T-cell (primary cell): ENCODE measurements at regions of chr9 and their contacts with region 1.

Region 1: GRCh38 chr9:14353222-14354056 is 39.5 kb upstream of the NFIB start:
- DNase-seq: peak in 34 of 35 experiments; percentile 4 to 71 (median 46)
- ATAC-seq: peak in 2 of 4 experiments; percentile 50 to 53
- H3K4me3 ChIP-seq: no peak overlapping the region
- H3K4me3 Mint-ChIP-seq: no peak overlapping the region
- H3K27ac ChIP-seq: no peak overlapping the region
- H3K27ac Mint-ChIP-seq: no peak overlapping the region
- H3K4me1 ChIP-seq: peaks cover 0 to 5% of the 10 kb centered on the region in 2 experiments
- H3K4me1 Mint-ChIP-seq: peaks cover 8 to 11% (median 11%) of the 10 kb centered on the region in 3 donors
- H3K27me3 ChIP-seq: peaks cover 0 to 38% of the 10 kb centered on the region in 2 experiments
- H3K27me3 Mint-ChIP-seq: peaks cover 60 to 61% of the 10 kb centered on the region in 2 donors

Region 2: DNA sequence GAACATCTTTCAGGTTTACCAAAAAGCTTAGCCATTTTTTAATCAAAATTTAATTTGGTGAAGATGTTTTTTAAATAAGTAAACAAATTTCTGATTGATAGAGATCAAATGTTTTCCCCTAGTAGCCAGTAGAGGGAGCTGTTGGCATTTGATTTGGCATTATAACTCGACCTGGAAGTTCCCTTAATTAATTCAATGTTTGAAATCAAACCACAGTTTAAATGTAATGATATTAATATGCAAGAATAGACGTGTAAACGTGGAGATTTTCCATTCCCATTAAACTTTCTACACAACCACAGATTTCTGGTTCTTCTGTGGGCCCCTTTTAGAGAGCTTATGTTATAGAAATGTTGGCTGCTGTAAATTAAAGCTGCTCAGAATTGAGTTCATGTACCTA is 925.9 kb before region 1 on chr9:
- CTCF ChIA-PET with region 1: interaction called, 6 to 26 read pairs
- POLR2A ChIA-PET with region 1: no interaction called
- DNase-seq: peak in 1 of 35 experiments; percentile 42
- ATAC-seq: no peak
- H3K4me3 ChIP-seq: no peak overlapping the region
- H3K4me3 Mint-ChIP-seq: no peak overlapping the region
- H3K27ac ChIP-seq: no peak overlapping the region
- H3K27ac Mint-ChIP-seq: no peak overlapping the region
- H3K4me1 ChIP-seq: no peaks in the 10 kb centered on the region
- H3K4me1 Mint-ChIP-seq: no peaks in the 10 kb centered on the region
- H3K27me3 ChIP-seq: no peaks in the 10 kb centered on the region
- H3K27me3 Mint-ChIP-seq: no peaks in the 10 kb centered on the region

Region 3: DNA sequence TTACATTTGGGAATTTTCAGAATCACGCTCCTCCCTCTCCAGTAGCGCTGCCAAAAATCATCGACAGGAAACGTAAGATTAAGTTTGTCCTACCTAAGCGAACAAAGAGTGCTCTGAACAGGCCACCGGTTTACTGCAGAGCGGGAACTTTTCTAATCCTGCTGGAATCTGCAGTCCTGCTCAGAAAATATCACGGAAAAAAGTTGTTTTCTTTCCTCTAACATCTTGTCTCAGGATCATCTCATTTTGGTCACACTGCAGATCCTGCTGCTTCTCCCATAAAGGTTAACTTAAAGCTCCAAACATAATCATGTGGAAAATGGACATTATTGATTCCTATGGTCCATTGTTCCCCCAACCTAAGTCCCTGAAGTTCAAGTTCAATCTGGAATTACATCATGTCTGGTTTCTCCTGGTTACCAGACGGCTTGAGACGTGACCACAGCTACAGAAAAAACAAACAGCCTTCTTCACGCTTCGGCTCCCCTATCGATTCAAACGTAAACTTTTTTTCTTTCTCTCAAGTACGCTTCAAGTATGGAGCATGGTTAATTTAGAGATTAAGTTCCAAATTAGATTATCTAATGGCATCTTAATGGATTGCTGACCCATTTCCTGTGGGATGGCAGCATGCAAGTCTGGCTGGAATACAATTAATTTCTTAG is 257.0 kb before region 1 on chr9:
- CTCF ChIA-PET with region 1: no interaction called
- POLR2A ChIA-PET with region 1: no interaction called
- DNase-seq: no peak
- ATAC-seq: no peak
- H3K4me3 ChIP-seq: no peak overlapping the region
- H3K4me3 Mint-ChIP-seq: no peak overlapping the region
- H3K27ac ChIP-seq: no peak overlapping the region
- H3K27ac Mint-ChIP-seq: no peak overlapping the region
- H3K4me1 ChIP-seq: no peaks in the 10 kb centered on the region
- H3K4me1 Mint-ChIP-seq: no peaks in the 10 kb centered on the region
- H3K27me3 ChIP-seq: no peaks in the 10 kb centered on the region
- H3K27me3 Mint-ChIP-seq: no peaks in the 10 kb centered on the region

Region 4: DNA sequence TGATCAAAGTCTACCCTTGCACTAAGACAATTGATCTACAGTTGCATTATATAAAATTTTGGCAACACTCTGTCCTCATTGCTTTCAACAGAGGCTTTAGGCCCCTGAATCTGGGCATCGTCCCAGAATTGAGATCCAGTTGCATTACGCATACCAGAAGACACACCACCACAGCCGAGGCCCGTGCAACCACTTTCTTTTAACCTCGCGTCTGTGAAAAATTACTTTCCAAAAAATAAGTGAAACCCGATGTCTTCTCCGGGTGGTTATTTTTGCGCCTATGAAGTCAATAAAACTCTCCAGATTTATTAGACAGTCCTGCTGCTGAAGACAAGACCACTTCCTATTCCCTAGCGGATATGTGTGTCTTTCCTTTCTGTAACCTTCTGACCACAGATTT is 12.6 kb after region 1 on chr9:
- CTCF ChIA-PET with region 1: no interaction called
- POLR2A ChIA-PET with region 1: no interaction called
- DNase-seq: no peak
- ATAC-seq: no peak
- H3K4me3 ChIP-seq: no peak overlapping the region
- H3K4me3 Mint-ChIP-seq: no peak overlapping the region
- H3K27ac ChIP-seq: no peak overlapping the region
- H3K27ac Mint-ChIP-seq: no peak overlapping the region
- H3K4me1 ChIP-seq: no peaks in the 10 kb centered on the region
- H3K4me1 Mint-ChIP-seq: no peaks in the 10 kb centered on the region
- H3K27me3 ChIP-seq: no peaks in the 10 kb centered on the region
- H3K27me3 Mint-ChIP-seq: peaks cover 15 to 20% of the 10 kb centered on the region in 2 donors